ENCODE measurements at regions of chr10 and their contacts with region 1.

Region 1: DNA sequence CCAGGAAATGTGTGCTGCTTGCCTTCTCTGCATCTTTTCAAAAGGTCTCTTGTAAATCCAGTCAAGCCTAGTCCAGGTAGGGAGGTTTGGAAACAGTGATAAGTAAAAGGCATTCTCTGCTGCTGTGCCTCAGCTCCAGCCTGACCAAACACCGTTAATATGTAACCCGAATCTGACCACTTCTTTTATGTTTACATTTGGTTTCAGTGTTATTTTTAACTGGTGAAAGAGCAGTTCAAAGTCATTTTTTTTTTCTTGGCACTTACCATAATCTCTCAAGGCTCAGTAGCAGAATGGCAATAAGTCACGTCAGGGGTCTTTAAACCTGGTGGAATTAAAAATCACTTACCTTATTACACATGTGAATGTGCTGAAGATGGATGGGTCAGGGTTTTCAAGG is 216.8 kb downstream of the PTEN start:
- DNase-seq: no peak
- ATAC-seq: peak; percentile 75
- H3K4me3 ChIP-seq: peak overlapping the region; percentile 30
- H3K27ac ChIP-seq: peak overlapping the region; percentile 60
- H3K4me1 ChIP-seq: peaks cover 52% of the 10 kb centered on the region
- H3K27me3 ChIP-seq: no peaks in the 10 kb centered on the region
- CTCF ChIP-seq: no peak
- EP300 ChIP-seq: peak; percentile 75 to 82; a peak in 3 of 4 replicates
- POLR2A ChIP-seq: no peak
- RAD21 ChIP-seq: 0 out of 2 replicates have a peak, but pooled peaks have one; percentile 15

Region 2: GRCh38 chr10:88108115-88108610 is 27.9 kb after region 1 on chr10:
- CTCF ChIA-PET with region 1: interaction called, 8 read pairs
- POLR2A ChIA-PET with region 1: interaction called, 4 read pairs
- RAD21 ChIA-PET with region 1: interaction called, 14 read pairs
- SMC1A ChIA-PET with region 1: interaction called, 229 read pairs
- in situ Hi-C with region 1: no loop called
- intact Hi-C with region 1: no loop called
- DNase-seq: peak; percentile 94
- ATAC-seq: peak; percentile 56
- H3K4me3 ChIP-seq: no peak overlapping the region
- H3K27ac ChIP-seq: peak overlapping the region; percentile 92
- H3K4me1 ChIP-seq: peaks cover 92% of the 10 kb centered on the region
- H3K27me3 ChIP-seq: no peaks in the 10 kb centered on the region
- CTCF ChIP-seq: peak; percentile 39 to 46 (median 45); a peak in 5 of 6 replicates
- EP300 ChIP-seq: peak; percentile 69 to 76; a peak in 2 of 4 replicates
- POLR2A ChIP-seq: no peak
- RAD21 ChIP-seq: peak; percentile 41; the same call in 1 of the 2 replicates

Region 3: DNA sequence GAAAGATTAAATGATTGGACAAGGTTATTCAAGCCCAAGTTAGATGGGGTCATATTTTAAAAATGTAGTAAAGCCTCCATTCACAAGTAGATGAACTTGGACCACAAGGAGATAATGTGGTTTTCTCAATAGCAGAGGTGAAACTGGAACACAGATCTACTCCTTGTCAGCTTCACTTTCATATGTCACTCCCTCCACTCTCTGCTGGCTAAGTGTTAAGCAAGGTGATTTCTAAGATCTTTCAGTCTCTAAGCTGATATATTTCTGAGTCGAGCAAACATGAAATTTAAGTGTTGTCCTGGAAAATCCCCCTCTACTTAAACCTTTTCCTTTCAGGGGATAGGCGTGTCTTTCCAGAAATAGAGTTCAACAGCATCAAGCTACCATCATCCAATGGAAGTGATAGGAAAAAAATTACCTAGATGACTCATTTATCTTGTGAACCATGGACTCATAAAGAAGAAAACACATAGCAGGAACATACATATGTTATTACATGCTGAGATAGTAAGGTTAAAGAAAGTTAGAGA is 58.2 kb after region 1 on chr10:
- CTCF ChIA-PET with region 1: no interaction called
- POLR2A ChIA-PET with region 1: no interaction called
- RAD21 ChIA-PET with region 1: no interaction called
- SMC1A ChIA-PET with region 1: interaction called, 3 read pairs
- in situ Hi-C with region 1: no loop called
- intact Hi-C with region 1: loop called (anchors 2 kb)
- DNase-seq: peak; percentile 74
- ATAC-seq: peak; percentile 97
- H3K4me3 ChIP-seq: no peak overlapping the region
- H3K27ac ChIP-seq: peak overlapping the region; percentile 16
- H3K4me1 ChIP-seq: peaks cover 16% of the 10 kb centered on the region; the same call in 1 of the 2 replicates
- H3K27me3 ChIP-seq: no peaks in the 10 kb centered on the region
- CTCF ChIP-seq: no peak
- EP300 ChIP-seq: peak in 1 of 2 experiments; percentile 72; a peak in 3 of 4 replicates
- POLR2A ChIP-seq: no peak
- RAD21 ChIP-seq: no peak

Measured in GM12878 (cell line).